Activated CD8-positive, alpha-beta memory T cell treated with anti-CD3 and anti-CD28 coated beads, Interleukin-2, amount 10 ng/mL, durations not matched to agents 7 days and 5 days (primary cell): ENCODE measurements at regions of chr5 and their contacts with region 1.

Region 1: GRCh38 chr5:33997331-33997983 is 10.4 kb downstream of the AMACR start:
- DNase-seq: peak; percentile 48
- ATAC-seq: peak; percentile 68
- H3K4me3 Mint-ChIP-seq: no peak overlapping the region
- H3K27ac Mint-ChIP-seq: no peak overlapping the region
- H3K4me1 Mint-ChIP-seq: peaks cover 29% of the 10 kb centered on the region
- H3K27me3 Mint-ChIP-seq: no peaks in the 10 kb centered on the region

Region 2: GRCh38 chr5:34007621-34008600 is 10.5 kb after region 1 on chr5 and contains the start of gene AMACR:
- CTCF ChIA-PET with region 1: interaction called, 28 read pairs
- DNase-seq: peak; percentile 88
- ATAC-seq: peak; percentile 89
- H3K4me3 Mint-ChIP-seq: peak within 1 kb of the TSS; percentile 73
- H3K27ac Mint-ChIP-seq: peak within 1 kb of the TSS; percentile 91
- H3K4me1 Mint-ChIP-seq: peaks cover 34% of the 10 kb centered on the region
- H3K27me3 Mint-ChIP-seq: no peaks in the 10 kb centered on the region
- total RNA-seq, gene AMACR: 6.6 to 9.5 TPM

Region 3: DNA sequence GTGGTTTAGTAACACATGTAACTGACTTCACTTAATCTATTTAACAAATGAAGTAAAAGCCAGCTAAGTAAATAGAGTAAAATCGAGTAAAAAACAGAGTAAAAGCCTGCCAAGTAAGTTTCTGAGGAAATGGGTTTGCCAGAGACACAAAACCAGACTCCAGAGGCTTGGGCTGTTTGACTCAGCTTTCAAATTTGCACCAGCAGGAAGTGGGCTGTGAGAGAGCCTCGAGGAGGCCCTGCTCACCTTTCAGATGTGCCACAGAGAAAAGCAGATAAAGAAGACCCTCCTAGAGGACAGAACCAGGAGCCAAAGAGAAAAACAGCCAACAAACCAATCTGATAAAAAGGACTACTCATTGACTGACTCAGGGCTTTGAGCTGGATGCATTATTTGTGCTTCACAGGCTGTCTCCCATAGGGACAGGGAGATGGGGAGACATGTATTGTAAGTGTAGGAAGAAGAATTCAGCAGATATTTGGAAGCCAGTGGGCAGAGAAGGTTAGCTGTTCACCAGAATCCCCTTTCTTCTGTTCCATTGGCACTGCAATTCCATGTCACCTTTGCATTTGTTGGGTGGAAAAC is 24.8 kb after region 1 on chr5:
- CTCF ChIA-PET with region 1: interaction called, 22 read pairs
- DNase-seq: peak; percentile 85
- ATAC-seq: peak; percentile 99
- H3K4me3 Mint-ChIP-seq: no peak overlapping the region
- H3K27ac Mint-ChIP-seq: peak overlapping the region; percentile 87
- H3K4me1 Mint-ChIP-seq: peaks cover 39% of the 10 kb centered on the region
- H3K27me3 Mint-ChIP-seq: no peaks in the 10 kb centered on the region